ENCODE measurements at regions of chr2 and their contacts with region 1.

Region 1: GRCh38 chr2:75464348-75464946 is 96.3 kb downstream of the EVA1A start:
- DNase-seq: no peak
- H3K4me3 Mint-ChIP-seq: no peak overlapping the region
- H3K27ac Mint-ChIP-seq: no peak overlapping the region
- H3K4me1 Mint-ChIP-seq: no peaks in the 10 kb centered on the region
- H3K27me3 Mint-ChIP-seq: peaks cover 23% of the 10 kb centered on the region

Region 2: DNA sequence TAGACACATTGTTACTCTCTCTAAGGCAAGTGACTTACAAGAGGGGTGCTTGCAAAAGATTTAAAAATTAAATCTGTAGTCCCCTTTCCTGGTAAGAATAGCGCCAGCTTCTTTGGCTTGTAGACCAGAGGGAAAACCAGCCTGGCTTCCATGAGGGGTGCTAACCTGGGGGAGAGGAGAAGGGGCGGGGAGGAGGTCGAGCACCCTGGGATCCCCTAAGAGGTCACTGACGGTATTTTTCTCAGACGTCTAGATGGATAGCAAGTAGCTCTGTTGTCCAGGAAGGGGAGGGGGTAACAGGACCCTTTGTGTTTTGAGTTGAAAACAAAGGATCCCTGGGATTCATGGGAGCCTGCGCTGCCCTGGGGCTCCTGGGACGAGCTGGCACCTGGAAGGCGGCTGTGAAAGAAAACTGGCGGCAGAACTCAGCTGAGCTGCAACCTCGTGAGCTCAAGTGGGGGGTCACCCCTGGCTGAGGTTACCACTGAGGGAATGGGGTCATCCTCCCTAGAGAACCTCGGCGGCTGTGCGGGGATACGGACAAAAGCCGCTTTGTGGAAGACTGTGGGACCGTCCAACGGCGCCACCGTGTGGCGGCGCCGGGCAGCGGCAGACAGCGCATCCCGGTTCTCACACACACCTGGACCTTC is 144.4 kb after region 1 on chr2:
- intact Hi-C with region 1: loop called (anchors 1 kb)
- DNase-seq: peak; percentile 28
- H3K4me3 Mint-ChIP-seq: no peak overlapping the region
- H3K27ac Mint-ChIP-seq: no peak overlapping the region
- H3K4me1 Mint-ChIP-seq: peaks cover 6% of the 10 kb centered on the region
- H3K27me3 Mint-ChIP-seq: peaks cover 41% of the 10 kb centered on the region

Region 3: DNA sequence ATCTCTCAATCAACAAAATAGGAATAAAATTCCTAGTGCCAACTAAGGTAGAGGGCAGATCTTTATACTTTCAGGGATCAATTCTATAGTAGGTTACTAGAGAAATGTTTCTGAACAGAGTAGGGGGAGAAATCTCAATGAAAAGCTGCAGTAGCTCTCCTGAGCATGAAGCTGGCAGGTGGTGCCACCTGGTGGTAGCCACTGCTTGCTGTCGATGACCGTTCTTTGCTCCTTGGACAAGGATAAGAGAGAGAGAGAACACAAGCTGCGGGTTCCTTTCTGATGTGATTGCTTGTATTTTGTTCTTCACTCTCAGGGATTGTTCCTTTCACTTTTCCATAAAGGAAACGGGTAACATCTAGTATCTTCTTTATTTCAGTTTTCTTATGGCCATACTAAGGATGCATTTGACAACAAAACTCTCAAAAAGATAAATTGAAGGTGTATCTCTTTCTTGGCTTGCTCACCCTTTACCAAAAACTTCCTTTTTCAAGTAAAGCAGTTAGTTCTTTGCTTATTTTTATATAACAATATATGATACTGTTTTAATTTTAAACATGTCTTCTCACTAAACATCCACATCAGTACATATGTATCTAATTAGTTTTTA is 163.6 kb after region 1 on chr2:
- intact Hi-C with region 1: loop called (anchors 5 kb)
- DNase-seq: no peak
- H3K4me3 Mint-ChIP-seq: no peak overlapping the region
- H3K27ac Mint-ChIP-seq: no peak overlapping the region
- H3K4me1 Mint-ChIP-seq: no peaks in the 10 kb centered on the region
- H3K27me3 Mint-ChIP-seq: peaks cover 24% of the 10 kb centered on the region

Region 4: DNA sequence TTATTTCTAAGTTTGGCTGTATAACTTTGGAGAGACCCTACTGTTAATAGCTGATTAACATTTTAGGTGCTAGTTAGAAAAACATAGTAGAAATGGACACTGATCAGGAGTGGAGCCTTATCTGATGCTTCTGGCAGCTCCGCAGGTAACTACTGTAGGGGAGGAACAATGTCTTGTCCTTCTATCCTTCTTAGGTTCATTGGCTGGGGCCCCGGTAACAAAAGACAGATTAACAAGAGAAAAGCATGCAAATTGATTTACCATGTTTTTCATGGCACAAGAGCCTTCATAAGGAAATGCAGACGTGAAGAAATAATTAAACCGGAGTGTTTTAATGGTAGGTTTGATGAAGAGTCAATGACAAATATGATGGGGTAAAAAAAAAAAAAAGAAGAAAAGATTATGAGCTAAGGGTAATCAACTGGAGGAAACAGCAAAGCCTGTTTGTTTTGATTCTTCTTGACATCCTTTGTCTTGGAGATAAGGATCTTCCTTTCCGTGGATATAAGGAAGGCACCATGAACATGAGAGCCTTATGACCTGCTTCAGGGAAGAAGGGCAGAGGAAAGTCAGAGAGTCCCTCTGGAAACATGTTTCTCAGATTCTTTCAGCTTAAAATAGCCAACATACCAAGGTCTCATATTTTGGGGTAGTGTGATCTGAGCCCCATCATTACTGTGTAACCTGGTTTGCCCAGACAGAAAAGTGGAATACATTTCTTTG is 308.6 kb after region 1 on chr2:
- intact Hi-C with region 1: no loop called
- DNase-seq: no peak
- H3K4me3 Mint-ChIP-seq: no peak overlapping the region
- H3K27ac Mint-ChIP-seq: no peak overlapping the region
- H3K4me1 Mint-ChIP-seq: no peaks in the 10 kb centered on the region
- H3K27me3 Mint-ChIP-seq: no peaks in the 10 kb centered on the region